Caco-2 (cell line): ENCODE measurements at regions of chr6 and their contacts with region 1.

Region 1: DNA sequence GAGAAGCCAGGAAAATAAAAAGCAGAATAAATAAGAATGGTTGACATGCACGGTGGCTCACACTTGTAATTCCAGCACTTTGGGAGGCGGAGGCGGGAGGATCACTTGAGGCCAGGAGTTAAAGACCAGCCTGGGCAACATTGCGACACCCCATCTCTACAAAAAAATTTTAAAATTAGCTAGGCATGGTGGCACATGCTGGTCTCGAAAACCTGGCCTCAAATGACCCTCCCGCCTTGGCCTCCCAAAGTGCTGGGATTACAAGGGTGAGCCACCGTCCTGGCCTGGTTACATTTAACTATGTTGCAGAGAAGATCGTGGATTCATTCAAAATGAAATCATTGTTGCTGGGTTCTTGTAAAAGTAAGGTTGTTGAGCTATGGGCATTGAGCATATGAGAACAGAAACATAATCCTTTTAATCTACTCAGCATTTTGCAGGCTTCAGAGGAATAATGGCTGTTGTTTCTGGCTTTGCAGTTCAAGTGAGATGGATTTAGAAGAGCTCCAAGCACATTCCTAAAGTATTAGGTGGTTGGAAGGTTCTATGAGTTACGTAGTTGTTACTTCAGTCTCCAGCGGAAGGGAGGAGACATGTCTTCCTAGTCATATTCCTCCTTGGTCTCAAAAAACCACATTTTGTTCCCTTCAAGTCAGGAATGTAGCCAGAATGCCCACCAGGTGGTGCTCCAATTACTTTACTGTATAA is 45.6 kb upstream of the RAB23 start:
- DNase-seq: peak; percentile 42 to 66
- H3K4me3 ChIP-seq: no peak overlapping the region
- H3K4me3 Mint-ChIP-seq: no peak overlapping the region
- H3K27ac Mint-ChIP-seq: no peak overlapping the region
- H3K4me1 ChIP-seq: no peaks in the 10 kb centered on the region
- H3K4me1 Mint-ChIP-seq: no peaks in the 10 kb centered on the region
- H3K27me3 ChIP-seq: no peaks in the 10 kb centered on the region
- H3K27me3 Mint-ChIP-seq: peaks cover 2% of the 10 kb centered on the region
- CTCF ChIP-seq: peak; percentile 61 to 64

Region 2: GRCh38 chr6:57221936-57222742 is 45.6 kb before region 1 on chr6 and contains the start of gene RAB23:
- CTCF ChIA-PET with region 1: no interaction called
- POLR2A ChIA-PET with region 1: no interaction called
- intact Hi-C with region 1: loop called (anchors 1 kb)
- DNase-seq: peak; percentile 81 to 93
- H3K4me3 ChIP-seq: peak within 1 kb of the TSS; percentile 78
- H3K4me3 Mint-ChIP-seq: peak within 1 kb of the TSS; percentile 94
- H3K27ac Mint-ChIP-seq: peak within 1 kb of the TSS; percentile 90
- H3K4me1 ChIP-seq: peaks cover 4% of the 10 kb centered on the region; the same call in 1 of the 2 replicates
- H3K4me1 Mint-ChIP-seq: peaks cover 10% of the 10 kb centered on the region
- H3K27me3 ChIP-seq: no peaks in the 10 kb centered on the region
- H3K27me3 Mint-ChIP-seq: no peaks in the 10 kb centered on the region
- CTCF ChIP-seq: no peak
- total RNA-seq, gene RAB23: 12.6 and 13.7 TPM in 2 replicates

Region 3: GRCh38 chr6:57252975-57253374 is 14.8 kb before region 1 on chr6:
- CTCF ChIA-PET with region 1: no interaction called
- POLR2A ChIA-PET with region 1: no interaction called
- intact Hi-C with region 1: no loop called
- DNase-seq: no peak
- H3K4me3 ChIP-seq: no peak overlapping the region
- H3K4me3 Mint-ChIP-seq: no peak overlapping the region
- H3K27ac Mint-ChIP-seq: no peak overlapping the region
- H3K4me1 ChIP-seq: no peaks in the 10 kb centered on the region; the same call in 1 of the 2 replicates
- H3K4me1 Mint-ChIP-seq: peaks cover 14% of the 10 kb centered on the region
- H3K27me3 ChIP-seq: no peaks in the 10 kb centered on the region
- H3K27me3 Mint-ChIP-seq: no peaks in the 10 kb centered on the region
- CTCF ChIP-seq: no peak